Tibial artery (tissue), 4 donors: ENCODE measurements at regions of chr5 and their contacts with region 1.

Region 1: GRCh38 chr5:172035039-172035438 is 28.6 kb upstream of the FBXW11 start:
- DNase-seq: no peak
- H3K4me3 ChIP-seq: no peak overlapping the region
- H3K27ac ChIP-seq: no peak overlapping the region
- H3K4me1 ChIP-seq: no peaks in the 10 kb centered on the region
- H3K27me3 ChIP-seq: no peaks in the 10 kb centered on the region
- CTCF ChIP-seq: no peak

Region 2: DNA sequence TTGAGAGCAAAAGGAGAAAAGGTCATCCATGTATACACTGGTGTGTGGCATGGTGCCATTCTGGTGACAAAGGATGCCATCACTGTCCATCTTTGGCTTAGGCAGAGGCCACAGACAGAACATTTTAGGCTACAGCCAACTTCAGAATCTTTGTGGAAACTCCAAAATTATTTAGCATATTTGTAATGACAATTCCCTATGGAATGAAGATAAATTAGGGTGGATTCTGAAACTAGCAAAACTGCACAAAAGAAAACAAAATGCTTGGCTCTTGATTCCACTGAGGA is 121.1 kb before region 1 on chr5:
- intact Hi-C with region 1: loop called (anchors 2 kb)
- DNase-seq: no peak
- H3K4me3 ChIP-seq: no peak overlapping the region
- H3K27ac ChIP-seq: no peak overlapping the region
- H3K4me1 ChIP-seq: peaks cover 0 to 51% (median 15%) of the 10 kb centered on the region in 4 donors
- H3K27me3 ChIP-seq: no peaks in the 10 kb centered on the region
- CTCF ChIP-seq: no peak

Region 3: GRCh38 chr5:172059661-172060100 is 24.6 kb after region 1 on chr5:
- intact Hi-C with region 1: no loop called
- DNase-seq: no peak
- H3K4me3 ChIP-seq: no peak overlapping the region
- H3K27ac ChIP-seq: no peak overlapping the region
- H3K4me1 ChIP-seq: no peaks in the 10 kb centered on the region
- H3K27me3 ChIP-seq: no peaks in the 10 kb centered on the region
- CTCF ChIP-seq: peak; percentile 41 to 51